Activated T-helper 1 cell treated with anti-CD3 and anti-CD28 coated beads, Interleukin-12 subunit alpha, Interleukin-12 subunit beta, Interleukin-2, Interleukin-4 antibody, amounts not matched to agents 30 ng/mL and 10 ng/mL and 1 ng/mL, durations not matched to agents 14 hours and 24 hours and 36 hours (primary cell): ENCODE measurements at regions of chr2 and their contacts with region 1.

Region 1: DNA sequence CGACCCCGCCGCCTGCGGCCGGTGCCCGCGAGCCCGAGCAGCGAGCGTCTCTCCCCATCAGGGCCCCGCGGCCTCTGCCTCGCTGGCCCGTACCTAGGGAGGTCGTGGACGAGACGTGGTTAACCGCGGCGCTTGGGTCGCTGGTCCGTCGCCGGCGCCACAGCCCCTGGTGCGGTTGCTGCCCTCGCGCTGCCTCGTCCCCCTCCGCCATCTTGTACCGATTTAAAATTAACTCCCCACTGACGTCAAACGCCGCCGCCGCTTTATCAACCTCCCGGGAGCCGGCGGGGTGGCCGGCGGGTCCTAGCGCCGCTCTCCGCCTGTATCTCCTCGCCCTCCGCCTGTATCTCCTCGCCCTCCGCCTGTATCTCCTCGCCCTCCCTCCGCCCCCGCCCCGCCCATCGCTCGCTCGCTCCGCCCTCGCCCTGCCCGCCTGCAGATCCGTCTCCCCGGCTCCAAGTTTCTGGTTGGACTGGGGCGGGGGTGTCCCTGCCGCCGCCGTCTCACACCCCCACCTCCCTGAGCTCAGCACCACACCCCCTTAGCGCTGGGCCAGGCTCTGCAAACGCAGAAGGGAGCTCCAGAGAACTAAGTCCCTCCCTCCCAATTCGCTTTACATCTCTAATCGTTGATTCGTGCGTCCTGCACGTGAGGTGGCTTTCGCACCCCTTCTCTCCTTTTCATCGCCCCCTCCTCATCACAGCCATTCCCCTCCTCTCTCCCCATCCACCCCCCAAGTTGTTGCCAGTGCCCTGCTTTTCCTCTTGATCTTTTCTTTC is at the start of gene ATL2:
- DNase-seq: peak; percentile 92
- H3K4me3 Mint-ChIP-seq: peak within 1 kb of the TSS; percentile 95
- H3K27ac Mint-ChIP-seq: peak within 1 kb of the TSS; percentile 96
- H3K4me1 Mint-ChIP-seq: peaks cover 55% of the 10 kb centered on the region
- H3K27me3 Mint-ChIP-seq: peaks cover 14% of the 10 kb centered on the region
- total RNA-seq, gene ATL2: 62.1 and 72.5 TPM in 2 replicates

Region 2: GRCh38 chr2:38264396-38265281 is 112.6 kb before region 1 on chr2:
- intact Hi-C with region 1: loop called (anchors 1 kb)
- DNase-seq: no peak
- H3K4me3 Mint-ChIP-seq: no peak overlapping the region
- H3K27ac Mint-ChIP-seq: no peak overlapping the region
- H3K4me1 Mint-ChIP-seq: peaks cover 35% of the 10 kb centered on the region
- H3K27me3 Mint-ChIP-seq: peaks cover 2% of the 10 kb centered on the region

Region 3: DNA sequence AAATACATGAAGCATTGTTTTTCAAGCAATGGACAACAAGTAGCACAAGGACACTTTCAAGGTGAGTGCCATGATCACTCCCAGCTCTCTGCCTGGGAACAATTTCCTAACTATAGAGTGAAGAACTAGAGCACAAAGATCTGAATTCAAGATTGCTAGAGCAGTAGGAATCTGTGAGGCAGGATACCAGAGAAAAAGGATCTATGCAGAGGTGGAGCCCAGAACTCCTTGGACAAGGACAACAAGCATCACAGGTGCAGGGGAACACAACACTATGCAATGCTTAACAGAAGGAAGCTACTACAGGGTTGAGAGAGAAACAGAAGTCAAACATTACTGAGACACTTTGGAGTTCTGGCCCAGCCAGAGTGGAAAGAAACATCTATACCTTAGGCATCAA is 24.9 kb before region 1 on chr2:
- intact Hi-C with region 1: no loop called
- DNase-seq: no peak
- H3K4me3 Mint-ChIP-seq: no peak overlapping the region
- H3K27ac Mint-ChIP-seq: no peak overlapping the region
- H3K4me1 Mint-ChIP-seq: peaks cover 7% of the 10 kb centered on the region
- H3K27me3 Mint-ChIP-seq: no peaks in the 10 kb centered on the region

Region 4: GRCh38 chr2:38394903-38395341 is 17.7 kb after region 1 on chr2:
- intact Hi-C with region 1: loop called (anchors 2 kb)
- DNase-seq: no peak
- H3K4me3 Mint-ChIP-seq: no peak overlapping the region
- H3K27ac Mint-ChIP-seq: no peak overlapping the region
- H3K4me1 Mint-ChIP-seq: peaks cover 9% of the 10 kb centered on the region
- H3K27me3 Mint-ChIP-seq: peaks cover 15% of the 10 kb centered on the region

Region 5: DNA sequence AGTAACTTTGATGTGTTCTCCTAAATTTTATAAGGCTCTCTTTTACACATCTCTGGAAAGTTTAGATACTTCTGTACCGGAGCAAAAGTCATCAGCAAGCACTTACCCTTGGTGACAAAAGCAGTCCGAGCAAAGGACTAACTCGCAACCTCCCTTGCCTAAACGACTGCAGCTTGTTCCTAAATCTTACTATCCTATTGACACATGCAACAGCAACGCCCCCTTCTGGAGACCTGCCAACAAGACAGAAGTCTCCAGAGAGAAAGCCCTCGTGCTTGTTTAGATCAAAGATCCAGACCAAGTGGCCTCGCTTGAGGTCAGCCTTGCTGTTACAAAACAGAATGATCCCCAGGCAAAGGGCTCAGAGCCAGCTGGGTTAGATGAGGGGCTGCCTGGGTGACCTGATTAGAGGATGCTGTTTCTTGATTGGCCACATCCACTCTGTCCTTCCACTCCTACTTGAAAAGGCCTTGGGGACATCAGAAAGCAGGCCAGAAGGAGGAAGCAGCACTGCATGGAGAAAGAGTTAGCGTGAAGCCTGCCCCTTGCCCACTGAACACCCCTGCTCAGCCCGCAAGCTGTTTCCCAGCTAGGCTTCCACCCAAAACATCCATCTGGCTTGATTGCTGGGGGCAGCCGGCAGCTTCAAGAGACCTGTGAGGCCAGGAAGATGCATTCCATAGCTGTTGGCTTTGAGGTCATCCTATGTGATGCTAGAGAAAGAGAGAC is 131.2 kb after region 1 on chr2:
- intact Hi-C with region 1: loop called (anchors 1 kb)
- DNase-seq: peak; percentile 67
- H3K4me3 Mint-ChIP-seq: no peak overlapping the region
- H3K27ac Mint-ChIP-seq: no peak overlapping the region
- H3K4me1 Mint-ChIP-seq: peaks cover 19% of the 10 kb centered on the region
- H3K27me3 Mint-ChIP-seq: peaks cover 2% of the 10 kb centered on the region

Region 6: GRCh38 chr2:38778687-38779082 is 401.4 kb after region 1 on chr2:
- intact Hi-C with region 1: loop called (anchors 1 kb)
- DNase-seq: no peak
- H3K4me3 Mint-ChIP-seq: peak overlapping the region; percentile 100
- H3K27ac Mint-ChIP-seq: peak overlapping the region; percentile 100
- H3K4me1 Mint-ChIP-seq: peaks cover 16% of the 10 kb centered on the region
- H3K27me3 Mint-ChIP-seq: peaks cover 13% of the 10 kb centered on the region